HAP-1 (cell line): ENCODE measurements at regions of chr1 and their contacts with region 1.

Region 1: DNA sequence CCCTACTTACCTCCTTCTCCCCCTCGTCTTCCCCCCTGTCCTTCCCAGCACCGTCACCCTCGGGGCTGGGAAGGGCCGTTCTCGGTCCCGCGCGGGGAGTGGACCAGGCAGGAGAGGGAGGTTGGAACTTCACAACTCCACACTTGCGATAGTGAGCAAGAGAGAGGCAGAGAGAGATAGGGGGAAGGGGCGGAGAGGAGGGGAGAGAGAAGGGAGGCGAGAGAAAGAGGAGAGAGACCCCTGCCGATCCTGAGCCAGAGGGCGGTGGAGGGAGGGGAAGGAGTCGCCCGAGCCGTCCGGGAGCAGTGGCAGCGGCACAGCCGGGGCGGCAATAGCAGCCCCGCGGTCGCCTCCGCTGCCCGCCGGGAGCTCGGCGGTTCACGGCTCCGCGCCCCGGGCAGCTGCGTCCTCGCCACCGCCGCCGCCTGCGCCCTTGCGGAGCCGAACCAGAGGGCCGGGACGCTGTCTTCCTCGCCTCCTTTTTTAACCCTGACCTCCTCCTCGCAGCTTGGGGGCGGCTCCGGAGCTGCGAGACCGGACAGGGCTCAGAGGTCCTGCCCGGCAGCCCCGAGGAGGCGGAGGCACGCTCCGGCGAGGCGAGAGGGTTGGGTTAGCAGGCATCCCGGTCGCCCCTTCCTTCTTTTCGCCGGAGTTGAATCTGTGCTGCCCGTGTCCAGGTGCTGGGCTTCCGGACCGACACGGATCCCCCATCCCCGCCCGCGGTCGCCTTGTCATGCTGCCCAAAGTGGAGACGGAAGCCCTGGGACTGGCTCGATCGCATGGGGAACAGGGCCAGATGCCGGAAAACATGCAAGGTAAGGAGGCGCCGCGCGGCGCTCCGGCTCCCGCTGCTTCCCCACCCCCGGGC is 11.7 kb downstream of the NR5A2 start:
- DNase-seq: peak; percentile 54 to 65
- H3K4me3 ChIP-seq: peak overlapping the region; percentile 78
- H3K4me1 ChIP-seq: peaks cover 22% of the 10 kb centered on the region
- H3K27me3 ChIP-seq: no peaks in the 10 kb centered on the region

Region 2: GRCh38 chr1:199794105-199794863 is 244.9 kb before region 1 on chr1:
- in situ Hi-C with region 1: loop called (anchors 10 kb)
- DNase-seq: no peak
- H3K4me3 ChIP-seq: no peak overlapping the region
- H3K4me1 ChIP-seq: peaks cover 31% of the 10 kb centered on the region
- H3K27me3 ChIP-seq: no peaks in the 10 kb centered on the region